ENCODE measurements at regions of chr15 and their contacts with region 1.

Region 1: GRCh38 chr15:41416742-41417406 is at the start of gene RTF1:
- DNase-seq: peak; percentile 95 to 98
- ATAC-seq: peak; percentile 96 to 99 (median 98)
- H3K4me3 ChIP-seq: peak within 1 kb of the TSS; percentile 81 to 100 (median 92)
- H3K27ac ChIP-seq: peak within 1 kb of the TSS; percentile 33 to 93 (median 88)
- H3K4me1 ChIP-seq: peaks cover 10 to 44% (median 31%) of the 10 kb centered on the region in 9 donors
- H3K27me3 ChIP-seq: no peaks in the 10 kb centered on the region
- CTCF ChIP-seq: no peak
- total RNA-seq, gene RTF1: 25.8 to 38.0 (median 31.4) TPM

Region 2: DNA sequence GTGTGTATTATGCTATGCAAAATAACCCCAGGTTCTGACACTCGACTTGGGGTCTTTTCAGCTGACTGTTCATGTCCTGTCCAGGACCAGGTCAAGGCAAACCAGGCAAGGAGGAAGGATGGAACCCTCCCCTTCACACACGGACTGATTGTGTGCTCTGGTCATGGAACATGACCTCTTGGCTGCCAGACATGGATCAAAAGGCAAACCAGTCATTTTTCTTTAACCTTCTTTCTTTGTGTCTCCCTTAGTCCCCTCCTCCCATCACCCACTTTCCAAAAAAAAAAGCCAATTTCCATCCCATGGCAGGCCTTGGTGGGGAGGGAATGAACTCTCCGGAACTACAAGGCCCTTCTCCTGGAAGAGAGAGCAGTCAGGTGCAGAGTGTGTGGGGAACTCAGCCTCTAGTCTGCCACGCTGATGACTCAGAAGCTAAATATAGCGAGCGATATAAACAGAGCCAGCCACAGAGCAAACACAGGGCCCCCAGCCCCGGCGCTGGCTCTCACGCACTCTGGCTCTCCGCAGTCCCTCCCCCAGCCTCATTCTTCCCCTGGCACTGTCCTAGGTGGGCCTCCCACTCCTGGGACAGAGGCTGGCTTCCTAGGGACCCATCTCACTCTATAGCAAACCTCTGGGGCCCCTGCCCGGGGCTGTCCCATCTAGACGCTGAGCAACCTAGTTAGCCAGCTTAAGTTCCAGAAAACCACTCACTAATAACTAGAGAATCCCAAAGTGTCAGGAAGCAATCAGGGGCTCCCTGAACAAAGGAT is 1318.2 kb before region 1 on chr15:
- intact Hi-C with region 1: no loop called
- DNase-seq: peak; percentile 53 to 82
- ATAC-seq: peak; percentile 77 to 90 (median 84)
- H3K4me3 ChIP-seq: peak overlapping the region in 1 of 10 donors; percentile 3
- H3K27ac ChIP-seq: peak overlapping the region; percentile 37 to 95 (median 88)
- H3K4me1 ChIP-seq: peaks cover 30 to 95% (median 73%) of the 10 kb centered on the region in 9 donors
- H3K27me3 ChIP-seq: no peaks in the 10 kb centered on the region
- CTCF ChIP-seq: no peak

Region 3: DNA sequence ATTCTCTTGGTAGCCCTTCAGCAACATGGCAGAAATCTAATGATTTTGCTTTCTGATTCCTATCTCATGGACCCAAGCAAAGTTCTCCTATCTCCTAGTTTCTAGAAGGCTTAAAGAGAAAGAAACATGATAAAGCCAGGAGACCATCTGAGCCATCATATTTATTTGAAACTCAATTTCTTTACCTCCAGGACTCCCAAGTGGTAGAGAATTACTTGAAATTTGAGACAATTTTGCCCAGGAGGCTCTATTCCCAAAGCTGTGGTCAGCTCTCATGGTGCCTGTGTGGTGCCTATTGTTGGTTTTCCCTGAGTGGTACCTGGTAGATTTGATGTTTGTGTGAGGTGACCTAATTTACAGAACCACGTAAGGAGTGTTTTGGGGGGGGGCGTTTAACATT is 147.0 kb before region 1 on chr15:
- intact Hi-C with region 1: no loop called
- DNase-seq: no peak
- ATAC-seq: no peak
- H3K4me3 ChIP-seq: no peak overlapping the region
- H3K27ac ChIP-seq: no peak overlapping the region
- H3K4me1 ChIP-seq: no peaks in the 10 kb centered on the region
- H3K27me3 ChIP-seq: no peaks in the 10 kb centered on the region
- CTCF ChIP-seq: no peak

Region 4: DNA sequence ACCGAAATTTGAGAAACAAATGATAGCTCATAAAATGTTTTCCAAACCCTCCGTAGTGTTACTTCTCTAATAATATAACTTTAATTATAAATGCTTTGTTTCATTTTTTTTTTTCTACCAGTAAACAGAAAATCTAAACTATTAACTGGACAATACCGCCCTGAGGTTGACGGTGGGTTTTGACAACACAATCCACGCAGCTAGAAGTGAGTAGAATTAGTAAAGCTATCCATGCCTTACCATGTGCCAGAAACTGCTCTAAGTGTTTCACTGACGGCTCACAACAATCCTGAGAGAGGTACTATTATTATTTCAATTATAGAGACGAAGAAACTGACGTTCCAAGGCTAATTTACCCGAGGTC is 15.0 kb before region 1 on chr15:
- intact Hi-C with region 1: loop called in 1 of 10 experiments (anchors 1 kb)
- DNase-seq: no peak
- ATAC-seq: peak in 7 of 8 donors; percentile 5 to 40 (median 26)
- H3K4me3 ChIP-seq: peak overlapping the region; percentile 56 to 98 (median 85)
- H3K27ac ChIP-seq: peak overlapping the region in 9 of 10 donors; percentile 64 to 97 (median 87)
- H3K4me1 ChIP-seq: peaks cover 0 to 21% (median 9%) of the 10 kb centered on the region in 9 donors
- H3K27me3 ChIP-seq: no peaks in the 10 kb centered on the region
- CTCF ChIP-seq: no peak